ENCODE measurements at regions of chr20 and their contacts with region 1.

Region 1: GRCh38 chr20:13755809-13756208 is 28.9 kb downstream of the ESF1 start:
- DNase-seq: no peak
- H3K4me3 ChIP-seq: no peak overlapping the region
- H3K27ac ChIP-seq: peak overlapping the region; percentile 38 to 67
- H3K4me1 ChIP-seq: peaks cover 0 to 20% (median 4%) of the 10 kb centered on the region in 4 donors
- H3K27me3 ChIP-seq: no peaks in the 10 kb centered on the region
- CTCF ChIP-seq: peak; percentile 45 to 48

Region 2: DNA sequence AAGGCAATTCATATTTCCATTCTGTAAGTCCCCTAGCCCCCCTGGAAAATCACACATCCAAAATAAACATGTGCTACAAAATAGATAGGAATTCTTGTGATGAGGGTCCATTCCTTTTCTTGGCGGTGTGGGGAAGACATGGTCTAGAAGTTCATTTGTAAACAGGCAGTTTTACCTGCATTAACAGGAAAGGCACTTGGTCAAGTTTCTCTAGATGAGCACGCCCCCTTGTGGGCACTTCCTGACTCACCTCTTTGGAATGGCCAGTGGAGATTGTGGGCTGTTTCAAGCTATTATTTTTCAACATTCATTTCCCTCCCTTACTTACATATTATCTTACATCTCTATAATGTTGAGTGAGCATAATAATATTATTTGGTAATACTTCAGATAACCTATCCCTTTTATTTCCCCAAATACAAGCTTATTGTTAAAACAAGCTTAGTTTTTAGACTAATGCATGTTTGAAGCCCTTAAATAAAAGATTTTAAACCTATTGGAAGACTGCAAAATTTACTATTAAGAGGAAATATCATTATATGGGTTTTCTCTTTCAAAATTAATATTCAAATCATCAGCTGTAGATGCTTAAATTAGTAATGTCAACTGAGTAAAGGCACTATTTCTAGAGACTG is 209.2 kb before region 1 on chr20:
- intact Hi-C with region 1: loop called (anchors 10 kb)
- DNase-seq: peak; percentile 85 to 87
- H3K4me3 ChIP-seq: no peak overlapping the region
- H3K27ac ChIP-seq: no peak overlapping the region
- H3K4me1 ChIP-seq: peaks cover 0 to 18% (median 8%) of the 10 kb centered on the region in 4 donors
- H3K27me3 ChIP-seq: no peaks in the 10 kb centered on the region
- CTCF ChIP-seq: peak; percentile 61 to 65

Measured in tibial artery (tissue), 4 donors.